ENCODE measurements at regions of chr17 and their contacts with region 1.

Region 1: GRCh38 chr17:34998205-34998604 is 17.9 kb downstream of the LIG3 start:
- DNase-seq: peak; percentile 64
- H3K4me3 Mint-ChIP-seq: no peak overlapping the region
- H3K27ac Mint-ChIP-seq: no peak overlapping the region
- H3K4me1 Mint-ChIP-seq: no peaks in the 10 kb centered on the region
- H3K27me3 Mint-ChIP-seq: no peaks in the 10 kb centered on the region
- CTCF ChIP-seq: peak; percentile 85

Region 2: DNA sequence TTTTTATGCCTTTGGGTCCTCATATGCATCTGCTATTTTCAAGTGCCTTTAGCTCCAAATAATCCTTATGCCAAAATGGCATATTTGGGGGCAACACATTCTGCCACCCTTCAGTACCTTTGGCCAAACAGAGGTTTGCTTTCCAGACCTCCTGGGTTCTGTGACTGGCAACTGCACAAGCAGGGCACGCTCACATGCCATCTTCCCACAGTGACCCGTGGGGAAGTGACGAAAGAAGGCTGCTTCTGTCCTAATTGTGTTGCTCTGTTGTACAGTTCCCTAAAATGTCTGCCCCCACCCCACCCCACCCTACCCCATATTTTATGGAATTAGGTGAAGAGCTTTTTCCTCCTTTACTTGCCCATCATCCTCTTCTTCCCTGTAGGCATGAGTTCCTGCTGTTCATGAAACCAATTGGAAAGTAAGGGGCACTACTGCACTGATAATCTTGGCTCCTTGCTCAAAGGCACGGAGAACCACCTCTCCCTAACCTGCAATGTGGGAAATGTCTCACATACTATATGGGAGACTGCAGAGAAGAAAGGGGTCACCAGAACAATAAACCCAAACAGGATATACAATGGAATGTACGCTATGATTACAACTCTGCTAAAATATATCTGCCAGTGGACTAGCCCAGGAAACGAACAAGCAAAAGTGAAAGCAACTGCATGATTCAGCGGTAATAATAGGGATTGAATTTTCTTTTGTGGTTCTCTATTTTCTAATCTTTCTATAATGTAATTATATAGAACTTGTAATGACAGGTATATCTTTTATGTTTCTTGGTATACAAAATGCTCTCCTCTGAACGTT is 542.6 kb after region 1 on chr17:
- CTCF ChIA-PET with region 1: no interaction called
- POLR2A ChIA-PET with region 1: no interaction called
- intact Hi-C with region 1: loop called (anchors 10 kb)
- DNase-seq: peak; percentile 27
- H3K4me3 Mint-ChIP-seq: peak overlapping the region; percentile 43
- H3K27ac Mint-ChIP-seq: no peak overlapping the region
- H3K4me1 Mint-ChIP-seq: no peaks in the 10 kb centered on the region
- H3K27me3 Mint-ChIP-seq: peaks cover 11% of the 10 kb centered on the region
- CTCF ChIP-seq: no peak